RWPE1 (cell line): ENCODE measurements at regions of chr4 and their contacts with region 1.

Region 1: GRCh38 chr4:40316782-40317635 is 18.1 kb upstream of the CHRNA9 start:
- DNase-seq: peak; percentile 73
- H3K27ac ChIP-seq: peak overlapping the region; percentile 98
- CTCF ChIP-seq: peak; percentile 80

Region 2: GRCh38 chr4:40056716-40057585 is 260.1 kb before region 1 on chr4 and contains the start of gene N4BP2:
- CTCF ChIA-PET with region 1: interaction called, 10 read pairs
- POLR2A ChIA-PET with region 1: interaction called, 14 read pairs
- DNase-seq: peak; percentile 82
- H3K27ac ChIP-seq: peak within 1 kb of the TSS; percentile 100
- CTCF ChIP-seq: peak; percentile 82

Region 3: GRCh38 chr4:40418430-40419230 is 101.6 kb after region 1 on chr4:
- CTCF ChIA-PET with region 1: no interaction called
- POLR2A ChIA-PET with region 1: no interaction called
- DNase-seq: no peak
- H3K27ac ChIP-seq: no peak overlapping the region
- CTCF ChIP-seq: no peak

Region 4: GRCh38 chr4:40621592-40622512 is 304.8 kb after region 1 on chr4:
- CTCF ChIA-PET with region 1: no interaction called
- POLR2A ChIA-PET with region 1: no interaction called
- DNase-seq: peak; percentile 75
- H3K27ac ChIP-seq: peak overlapping the region; percentile 58
- CTCF ChIP-seq: no peak